Mammary epithelial cell (primary cell): ENCODE measurements at regions of chr11 and their contacts with region 1.

Region 1: GRCh38 chr11:111938687-111939160 is 1.6 kb downstream of the DIXDC1 start:
- DNase-seq: peak; percentile 32
- H3K4me3 ChIP-seq: no peak overlapping the region
- H3K27ac ChIP-seq: no peak overlapping the region
- H3K4me1 ChIP-seq: peaks cover 34% of the 10 kb centered on the region
- H3K27me3 ChIP-seq: no peaks in the 10 kb centered on the region
- CTCF ChIP-seq: no peak

Region 2: GRCh38 chr11:111494040-111494439 is 444.7 kb before region 1 on chr11:
- CTCF ChIA-PET with region 1: interaction called, 15 read pairs
- dilution Hi-C with region 1: no loop called
- in situ Hi-C with region 1: no loop called
- intact Hi-C with region 1: no loop called
- DNase-seq: no peak
- H3K4me3 ChIP-seq: no peak overlapping the region
- H3K27ac ChIP-seq: no peak overlapping the region
- H3K4me1 ChIP-seq: no peaks in the 10 kb centered on the region
- H3K27me3 ChIP-seq: no peaks in the 10 kb centered on the region
- CTCF ChIP-seq: no peak

Region 3: GRCh38 chr11:112033156-112033555 is 94.4 kb after region 1 on chr11:
- CTCF ChIA-PET with region 1: no interaction called
- dilution Hi-C with region 1: no loop called
- in situ Hi-C with region 1: no loop called
- intact Hi-C with region 1: no loop called
- DNase-seq: no peak
- H3K4me3 ChIP-seq: no peak overlapping the region
- H3K27ac ChIP-seq: no peak overlapping the region
- H3K4me1 ChIP-seq: no peaks in the 10 kb centered on the region
- H3K27me3 ChIP-seq: no peaks in the 10 kb centered on the region
- CTCF ChIP-seq: no peak

Region 4: GRCh38 chr11:112086422-112087191 is 147.9 kb after region 1 on chr11 and contains the starts of genes SDHD and TIMM8B:
- CTCF ChIA-PET with region 1: no interaction called
- dilution Hi-C with region 1: no loop called
- in situ Hi-C with region 1: no loop called
- intact Hi-C with region 1: loop called (anchors 5 kb)
- DNase-seq: peak; percentile 95
- H3K4me3 ChIP-seq: peak within 1 kb of the TSS; percentile 93 to 98 (median 93)
- H3K27ac ChIP-seq: peak within 1 kb of the TSS; percentile 80
- H3K4me1 ChIP-seq: peaks cover 10% of the 10 kb centered on the region
- H3K27me3 ChIP-seq: no peaks in the 10 kb centered on the region
- CTCF ChIP-seq: peak in 1 of 2 donors; percentile 46
- total RNA-seq, gene SDHD: 57.7 to 58.5 TPM
- total RNA-seq, gene TIMM8B: 21.8 to 58.7 TPM